ENCODE measurements at regions of chr9 and their contacts with region 1.

Region 1: DNA sequence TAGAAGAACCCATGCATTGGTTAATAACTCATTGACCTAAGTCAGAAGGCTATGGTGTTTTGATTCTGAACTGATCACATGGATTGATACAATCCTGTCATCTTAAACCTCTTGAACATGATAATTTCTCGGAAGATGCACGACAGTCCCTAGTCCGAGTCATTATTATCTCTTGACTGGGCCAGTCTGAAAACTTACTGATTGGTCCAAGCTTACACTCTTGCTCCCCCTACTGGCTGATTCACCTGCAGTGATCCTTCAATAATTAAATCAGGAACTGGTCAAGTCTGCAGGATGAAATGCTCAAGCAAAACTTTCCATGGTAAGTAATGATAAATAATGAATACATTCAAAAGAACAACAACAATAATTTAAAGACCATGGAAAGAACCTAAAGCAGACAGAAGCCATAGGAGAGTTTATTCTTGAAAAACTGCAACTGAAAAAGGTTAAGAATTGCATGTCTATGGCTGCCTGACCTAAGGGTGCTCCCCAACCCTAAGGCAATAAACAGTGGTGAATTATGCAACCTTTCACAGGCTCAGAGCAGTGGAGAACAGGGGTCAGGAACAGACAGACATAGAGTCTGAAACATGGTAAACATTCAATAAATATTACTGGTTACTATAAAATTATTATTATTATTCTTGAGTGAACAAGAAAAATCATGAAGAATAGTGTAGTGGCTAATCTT is 79.3 kb downstream of the BRINP1 start:
- DNase-seq: peak; percentile 55 to 84 (median 68)
- H3K4me3 ChIP-seq: no peak overlapping the region
- H3K27ac ChIP-seq: no peak overlapping the region
- H3K4me1 ChIP-seq: no peaks in the 10 kb centered on the region
- H3K27me3 ChIP-seq: no peaks in the 10 kb centered on the region
- CTCF ChIP-seq: peak; percentile 76 to 87 (median 80)
- POLR2A ChIP-seq: no peak

Region 2: DNA sequence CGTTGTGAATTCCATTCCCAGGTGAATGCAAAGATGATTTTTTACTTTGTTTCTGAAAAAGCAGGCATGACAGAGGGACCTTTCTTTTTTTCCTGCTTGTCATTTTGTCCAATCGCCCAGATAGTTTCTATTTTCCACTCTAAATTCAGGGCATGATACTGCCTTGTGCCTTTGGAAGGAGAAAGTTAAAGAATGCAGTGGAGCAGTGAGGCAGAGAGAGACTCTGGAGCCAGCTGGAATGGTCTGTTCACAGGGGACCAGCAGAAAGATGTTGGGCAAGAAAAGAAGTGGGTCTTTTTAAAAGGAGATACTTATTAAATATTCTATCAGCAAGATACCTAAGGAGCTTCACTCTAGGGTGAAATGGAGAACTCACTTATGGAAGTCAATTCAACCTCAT is 453.0 kb before region 1 on chr9:
- intact Hi-C with region 1: loop called in 1 of 2 experiments (anchors 10 kb)
- DNase-seq: no peak
- H3K4me3 ChIP-seq: no peak overlapping the region
- H3K27ac ChIP-seq: no peak overlapping the region
- H3K4me1 ChIP-seq: no peaks in the 10 kb centered on the region
- H3K27me3 ChIP-seq: no peaks in the 10 kb centered on the region
- CTCF ChIP-seq: no peak
- POLR2A ChIP-seq: no peak

Region 3: GRCh38 chr9:119240546-119240945 is 49.3 kb before region 1 on chr9:
- intact Hi-C with region 1: no loop called
- DNase-seq: no peak
- H3K4me3 ChIP-seq: no peak overlapping the region
- H3K27ac ChIP-seq: no peak overlapping the region
- H3K4me1 ChIP-seq: no peaks in the 10 kb centered on the region
- H3K27me3 ChIP-seq: no peaks in the 10 kb centered on the region
- CTCF ChIP-seq: no peak
- POLR2A ChIP-seq: no peak